ENCODE measurements at regions of chr3 and their contacts with region 1.

Region 1: GRCh38 chr3:101724329-101725193 is at the start of gene CEP97:
- H3K4me3 ChIP-seq: peak within 1 kb of the TSS; percentile 70
- H3K27ac ChIP-seq: no peak within 1 kb of the TSS; the same call in 1 of the 2 replicates
- H3K4me1 ChIP-seq: no peaks in the 10 kb centered on the region
- CTCF ChIP-seq: no peak

Region 2: GRCh38 chr3:101685870-101686412 is 38.6 kb before region 1 on chr3:
- CTCF ChIA-PET with region 1: no interaction called
- POLR2A ChIA-PET with region 1: interaction called, 11 read pairs
- H3K4me3 ChIP-seq: peak overlapping the region; percentile 84
- H3K27ac ChIP-seq: peak overlapping the region; percentile 93
- H3K4me1 ChIP-seq: no peaks in the 10 kb centered on the region
- CTCF ChIP-seq: no peak

Measured in HEK293 (cell line).